ENCODE measurements at regions of chr11 and their contacts with region 1.

Region 1: GRCh38 chr11:65540297-65541092 is 15.6 kb downstream of the SCYL1 start:
- DNase-seq: peak in 1 of 2 experiments; percentile 98
- H3K4me3 ChIP-seq: peak overlapping the region; percentile 32 to 68 (median 46)
- H3K27ac ChIP-seq: no peak overlapping the region
- H3K4me1 ChIP-seq: peaks cover 0 to 9% (median 1%) of the 10 kb centered on the region in 4 experiments; a peak in 5 of 7 replicates
- H3K27me3 ChIP-seq: peaks cover 0 to 38% (median 21%) of the 10 kb centered on the region in 4 experiments; a peak in 6 of 7 replicates
- CTCF ChIP-seq: peak in 2 of 3 experiments; percentile 75 to 88; a peak in 3 of 4 replicates
- EP300 ChIP-seq: no peak
- POLR2A ChIP-seq: no peak; a peak in 1 of 3 replicates
- RAD21 ChIP-seq: peak; percentile 74 to 81

Region 2: DNA sequence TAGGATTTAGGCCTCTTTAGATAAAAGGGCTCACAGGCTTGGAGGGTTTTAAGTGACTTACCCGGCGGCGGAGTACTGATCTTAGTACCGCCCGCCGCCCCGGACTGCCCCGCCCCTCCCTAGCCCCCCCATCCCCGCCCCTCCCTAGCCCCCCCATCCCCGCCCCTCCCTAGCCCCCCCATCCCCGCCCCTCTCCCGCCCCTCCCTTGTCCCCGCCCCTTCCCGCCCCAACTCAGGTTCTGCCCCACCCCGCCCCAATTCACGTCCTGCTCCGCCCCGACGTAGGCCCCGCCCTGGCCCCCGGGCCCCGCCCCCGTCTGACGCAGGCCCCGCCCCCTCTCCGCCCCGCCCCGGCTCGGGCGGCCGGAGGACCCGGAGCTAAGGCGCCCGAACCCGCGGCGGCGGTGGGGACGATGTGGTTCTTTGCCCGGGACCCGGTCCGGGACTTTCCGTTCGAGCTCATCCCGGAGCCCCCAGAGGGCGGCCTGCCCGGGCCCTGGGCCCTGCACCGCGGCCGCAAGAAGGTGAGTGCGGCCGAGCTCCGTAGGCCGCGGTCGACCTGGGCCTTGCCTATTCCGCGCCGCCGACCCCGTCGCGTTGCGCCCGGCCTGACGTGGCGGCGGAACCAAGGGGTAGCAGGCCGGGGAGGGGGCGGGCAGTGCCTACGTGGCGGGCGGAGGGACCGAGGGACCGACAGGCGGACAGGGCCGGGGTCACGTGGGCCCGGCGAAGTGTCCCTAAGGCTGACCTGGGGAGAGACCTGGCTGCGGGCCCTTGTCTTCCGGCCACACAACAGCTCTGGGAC is 15.6 kb before region 1 on chr11 and contains the start of gene SCYL1:
- CTCF ChIA-PET with region 1: interaction called, 15 read pairs
- POLR2A ChIA-PET with region 1: interaction called, 62 read pairs
- DNase-seq: peak in 1 of 2 experiments; percentile 88
- H3K4me3 ChIP-seq: peak within 1 kb of the TSS; percentile 60 to 98 (median 82)
- H3K27ac ChIP-seq: no peak within 1 kb of the TSS
- H3K4me1 ChIP-seq: peaks cover 0 to 14% (median 8%) of the 10 kb centered on the region in 4 experiments; a peak in 5 of 7 replicates
- H3K27me3 ChIP-seq: peaks cover 0 to 4% (median 0%) of the 10 kb centered on the region in 4 experiments; a peak in 2 of 7 replicates
- CTCF ChIP-seq: no peak
- EP300 ChIP-seq: no peak
- POLR2A ChIP-seq: peak in 1 of 2 experiments; percentile 53; a peak in 2 of 3 replicates
- RAD21 ChIP-seq: no peak
- total RNA-seq, gene SCYL1: 59.4 and 59.8 TPM in 2 replicates

Region 3: GRCh38 chr11:65551572-65552398 is 11.3 kb after region 1 on chr11:
- CTCF ChIA-PET with region 1: interaction called, 78 read pairs
- POLR2A ChIA-PET with region 1: interaction called, 10 read pairs
- DNase-seq: peak in 1 of 2 experiments; percentile 92
- H3K4me3 ChIP-seq: no peak overlapping the region
- H3K27ac ChIP-seq: no peak overlapping the region
- H3K4me1 ChIP-seq: peaks cover 0 to 36% (median 27%) of the 10 kb centered on the region in 4 experiments; a peak in 6 of 7 replicates
- H3K27me3 ChIP-seq: peaks cover 2 to 39% (median 26%) of the 10 kb centered on the region in 4 experiments; a peak in 6 of 7 replicates
- CTCF ChIP-seq: peak in 2 of 3 experiments; percentile 74 to 84; a peak in 3 of 4 replicates
- EP300 ChIP-seq: no peak
- POLR2A ChIP-seq: no peak
- RAD21 ChIP-seq: peak; percentile 36 to 58

Region 4: DNA sequence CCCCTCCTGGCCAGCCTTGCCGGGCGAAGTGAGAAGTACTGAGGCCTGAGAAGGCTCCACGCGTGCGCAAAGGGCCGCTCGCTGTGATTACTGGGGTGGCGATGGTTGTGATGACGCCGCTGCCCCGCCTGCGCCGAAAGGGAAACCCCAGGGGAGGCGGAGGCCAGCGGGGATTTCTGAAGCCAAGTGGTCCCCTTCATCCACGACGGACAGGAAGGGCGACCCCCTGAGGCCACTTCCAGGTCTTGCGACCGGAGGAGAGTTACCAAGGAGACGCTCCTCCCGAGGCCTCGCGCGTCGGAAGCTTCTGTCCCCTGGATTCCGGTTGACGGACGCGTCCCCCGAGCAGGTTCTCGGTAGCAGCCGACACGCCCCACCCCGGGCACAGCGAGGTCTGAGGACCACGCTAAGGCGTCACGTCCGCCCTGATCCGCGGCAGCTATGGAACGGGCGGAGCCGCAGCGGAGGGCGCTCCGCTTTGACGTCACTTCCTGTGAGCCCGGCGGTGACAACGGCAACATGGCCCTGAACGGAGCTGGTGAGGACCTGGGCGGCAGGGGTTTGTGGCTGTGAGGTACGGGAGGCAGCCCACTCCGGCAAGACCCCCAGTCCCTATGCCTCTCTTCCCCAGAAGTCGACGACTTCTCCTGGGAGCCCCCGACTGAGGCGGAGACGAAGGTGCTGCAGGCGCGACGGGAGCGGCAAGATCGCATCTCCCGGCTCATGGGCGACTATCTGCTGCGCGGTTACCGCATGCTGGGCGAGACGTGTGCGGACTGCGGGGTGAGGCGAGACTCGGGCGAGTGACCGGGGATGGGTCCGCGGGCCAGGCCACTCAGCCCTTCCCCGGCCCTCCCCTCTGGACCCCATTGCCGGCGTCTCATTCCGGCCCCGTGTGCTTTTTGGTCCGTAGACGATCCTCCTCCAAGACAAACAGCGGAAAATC is 29.8 kb after region 1 on chr11 and contains the start of gene ZNRD2:
- CTCF ChIA-PET with region 1: interaction called, 284 read pairs
- POLR2A ChIA-PET with region 1: interaction called, 21 read pairs
- DNase-seq: peak; percentile 95 to 96
- H3K4me3 ChIP-seq: peak within 1 kb of the TSS; percentile 67 to 97 (median 92)
- H3K27ac ChIP-seq: peak within 1 kb of the TSS; percentile 33; the same call in 1 of the 2 replicates
- H3K4me1 ChIP-seq: peaks cover 10 to 29% (median 18%) of the 10 kb centered on the region in 4 experiments
- H3K27me3 ChIP-seq: peaks cover 0 to 11% (median 6%) of the 10 kb centered on the region in 4 experiments; a peak in 6 of 7 replicates
- CTCF ChIP-seq: peak in 2 of 3 experiments; percentile 66 to 84; a peak in 3 of 4 replicates
- EP300 ChIP-seq: no peak
- POLR2A ChIP-seq: peak in 1 of 2 experiments; percentile 80; a peak in 2 of 3 replicates
- RAD21 ChIP-seq: peak; percentile 44 to 50; a peak in 3 of 4 replicates
- total RNA-seq, gene ZNRD2: 53.4 and 56.1 TPM in 2 replicates

Region 5: DNA sequence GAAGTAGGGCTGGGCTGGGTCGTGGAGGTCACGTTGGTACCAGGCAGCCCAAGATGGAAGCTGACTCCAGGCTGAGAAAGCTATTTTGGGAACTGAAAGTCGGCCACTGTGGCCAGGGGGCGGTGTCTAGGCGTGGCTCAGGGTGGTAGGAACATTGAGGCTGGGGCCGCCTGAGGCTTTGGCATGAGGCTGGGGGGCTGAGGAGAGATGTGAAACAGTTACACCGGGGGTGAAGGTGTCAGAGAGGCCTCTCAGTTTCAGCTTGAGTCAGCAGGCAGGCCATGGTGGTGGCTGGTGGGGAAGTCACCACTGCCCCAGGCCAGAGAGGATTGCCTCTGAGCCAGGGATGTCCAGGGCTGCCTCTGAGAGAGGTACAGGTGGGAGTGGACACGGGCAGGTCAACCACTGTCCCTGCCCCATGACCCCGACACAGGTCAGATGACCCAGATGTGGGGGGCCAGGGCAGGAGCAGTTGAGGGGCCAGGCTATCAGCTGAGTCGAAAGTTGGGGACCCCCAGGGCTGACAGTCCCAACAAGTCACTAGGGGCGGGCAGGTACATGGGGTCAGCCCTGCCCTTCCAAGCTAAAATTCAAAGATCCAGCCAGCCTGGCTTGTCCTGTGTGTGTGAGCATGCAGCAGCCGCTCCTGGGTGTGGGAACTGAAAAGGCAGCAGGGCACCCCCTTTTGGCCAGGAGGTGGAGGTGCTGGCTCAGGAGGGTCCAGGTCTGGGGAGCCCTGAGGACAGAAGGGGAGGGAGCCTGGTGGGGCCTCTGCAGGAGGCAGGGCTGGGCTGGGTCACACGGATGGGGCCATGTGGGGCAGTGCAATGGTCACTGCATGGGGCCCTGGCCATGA is 47.9 kb after region 1 on chr11:
- CTCF ChIA-PET with region 1: interaction called, 108 read pairs
- POLR2A ChIA-PET with region 1: interaction called, 14 read pairs
- DNase-seq: no peak
- H3K4me3 ChIP-seq: no peak overlapping the region
- H3K27ac ChIP-seq: no peak overlapping the region
- H3K4me1 ChIP-seq: peaks cover 3 to 31% (median 13%) of the 10 kb centered on the region in 4 experiments
- H3K27me3 ChIP-seq: peaks cover 27 to 57% (median 50%) of the 10 kb centered on the region in 4 experiments
- CTCF ChIP-seq: peak in 2 of 3 experiments; percentile 75 to 93; a peak in 3 of 4 replicates
- EP300 ChIP-seq: no peak
- POLR2A ChIP-seq: no peak
- RAD21 ChIP-seq: peak; percentile 58 to 71

Region 6: GRCh38 chr11:65606876-65607613 is 66.5 kb after region 1 on chr11:
- CTCF ChIA-PET with region 1: interaction called, 11 read pairs
- POLR2A ChIA-PET with region 1: interaction called, 3 read pairs
- DNase-seq: peak; percentile 94
- H3K4me3 ChIP-seq: peak overlapping the region; percentile 27 to 57 (median 37)
- H3K27ac ChIP-seq: no peak overlapping the region
- H3K4me1 ChIP-seq: peaks cover 0 to 20% (median 7%) of the 10 kb centered on the region in 4 experiments; a peak in 6 of 7 replicates
- H3K27me3 ChIP-seq: no peaks in the 10 kb centered on the region; a peak in 1 of 7 replicates
- CTCF ChIP-seq: no peak
- EP300 ChIP-seq: no peak
- POLR2A ChIP-seq: peak in 1 of 2 experiments; percentile 35; a peak in 1 of 3 replicates
- RAD21 ChIP-seq: no peak

Measured in H1 (cell line).